CD4-positive, alpha-beta memory T cell (primary cell): ENCODE measurements at regions of chr7 and their contacts with region 1.

Region 1: GRCh38 chr7:107150375-107151073 is 18.3 kb upstream of the HBP1 start:
- DNase-seq: peak; percentile 68 to 81 (median 74)
- H3K4me3 ChIP-seq: no peak overlapping the region
- H3K4me3 Mint-ChIP-seq: no peak overlapping the region
- H3K27ac ChIP-seq: no peak overlapping the region
- H3K27ac Mint-ChIP-seq: no peak overlapping the region
- H3K4me1 ChIP-seq: no peaks in the 10 kb centered on the region
- H3K4me1 Mint-ChIP-seq: peaks cover 0 to 2% (median 1%) of the 10 kb centered on the region in 4 donors
- H3K27me3 ChIP-seq: no peaks in the 10 kb centered on the region
- H3K27me3 Mint-ChIP-seq: peaks cover 0 to 2% of the 10 kb centered on the region in 2 donors

Region 2: GRCh38 chr7:106514881-106515280 is 635.6 kb before region 1 on chr7:
- CTCF ChIA-PET with region 1: no interaction called
- POLR2A ChIA-PET with region 1: no interaction called
- intact Hi-C with region 1: no loop called
- DNase-seq: no peak
- H3K4me3 ChIP-seq: no peak overlapping the region
- H3K4me3 Mint-ChIP-seq: no peak overlapping the region
- H3K27ac ChIP-seq: no peak overlapping the region
- H3K27ac Mint-ChIP-seq: no peak overlapping the region
- H3K4me1 ChIP-seq: no peaks in the 10 kb centered on the region
- H3K4me1 Mint-ChIP-seq: peaks cover 0 to 4% (median 3%) of the 10 kb centered on the region in 4 donors
- H3K27me3 ChIP-seq: no peaks in the 10 kb centered on the region
- H3K27me3 Mint-ChIP-seq: peaks cover 12 to 17% of the 10 kb centered on the region in 2 donors

Region 3: DNA sequence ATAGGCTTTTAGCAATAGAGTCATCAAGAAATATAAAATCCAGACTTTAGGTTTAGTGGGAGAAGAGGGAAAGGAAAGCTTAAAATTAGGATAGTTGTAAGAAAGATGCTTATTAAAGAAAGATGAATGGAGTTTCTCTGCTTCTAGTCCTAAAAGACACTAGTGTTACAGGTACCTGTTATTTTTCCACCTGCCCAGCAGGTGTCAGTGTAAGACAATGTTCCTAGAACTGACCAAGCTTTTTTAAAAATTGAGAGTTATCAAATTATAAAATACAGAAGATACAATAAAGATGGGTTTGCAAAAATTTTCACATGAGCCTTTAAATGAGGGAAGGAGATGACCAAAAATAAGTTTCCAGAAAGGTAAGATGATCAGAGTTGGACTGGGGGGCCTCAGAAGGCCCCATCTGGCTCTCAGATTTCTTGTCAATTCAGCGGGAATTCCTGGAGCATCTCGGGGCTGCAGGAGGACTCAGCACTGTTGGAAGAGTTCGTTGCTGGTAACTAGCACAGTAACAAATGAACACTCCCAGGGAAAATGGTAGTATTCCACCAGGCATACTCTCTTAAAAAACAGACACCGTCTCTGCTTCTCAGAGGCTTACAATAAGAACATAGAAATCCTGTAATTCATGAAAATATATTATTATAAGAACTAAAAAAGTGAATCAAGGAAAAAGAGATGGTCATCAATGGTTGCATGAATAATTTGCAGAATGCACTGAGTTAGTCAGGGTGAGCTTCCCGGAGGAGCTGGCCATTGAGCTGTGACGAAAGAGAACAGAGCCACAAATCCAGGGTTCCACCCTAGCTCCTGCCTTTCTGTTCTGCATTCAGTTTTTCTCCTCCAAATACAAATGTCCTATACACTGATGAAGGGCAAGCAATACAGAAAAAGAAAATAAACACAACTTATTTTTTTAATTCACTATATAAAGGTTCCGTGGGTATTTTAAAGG is 357.2 kb before region 1 on chr7:
- CTCF ChIA-PET with region 1: interaction called, 56 read pairs
- POLR2A ChIA-PET with region 1: interaction called, 8 read pairs
- intact Hi-C with region 1: loop called (anchors 1 kb)
- DNase-seq: peak in 4 of 5 donors; percentile 47 to 52 (median 48)
- H3K4me3 ChIP-seq: no peak overlapping the region
- H3K4me3 Mint-ChIP-seq: no peak overlapping the region
- H3K27ac ChIP-seq: no peak overlapping the region
- H3K27ac Mint-ChIP-seq: no peak overlapping the region
- H3K4me1 ChIP-seq: no peaks in the 10 kb centered on the region
- H3K4me1 Mint-ChIP-seq: peaks cover 0 to 3% (median 0%) of the 10 kb centered on the region in 4 donors
- H3K27me3 ChIP-seq: no peaks in the 10 kb centered on the region
- H3K27me3 Mint-ChIP-seq: peaks cover 2 to 3% of the 10 kb centered on the region in 2 donors

Region 4: GRCh38 chr7:107122486-107122911 is 28.0 kb before region 1 on chr7:
- CTCF ChIA-PET with region 1: interaction called, 19 read pairs
- POLR2A ChIA-PET with region 1: no interaction called
- intact Hi-C with region 1: no loop called
- DNase-seq: no peak
- H3K4me3 ChIP-seq: no peak overlapping the region
- H3K4me3 Mint-ChIP-seq: no peak overlapping the region
- H3K27ac ChIP-seq: no peak overlapping the region
- H3K27ac Mint-ChIP-seq: no peak overlapping the region
- H3K4me1 ChIP-seq: peaks cover 21% of the 10 kb centered on the region
- H3K4me1 Mint-ChIP-seq: peaks cover 13 to 24% (median 19%) of the 10 kb centered on the region in 4 donors
- H3K27me3 ChIP-seq: no peaks in the 10 kb centered on the region
- H3K27me3 Mint-ChIP-seq: peaks cover 4% of the 10 kb centered on the region in 2 donors

Region 5: GRCh38 chr7:107173691-107174406 is 23.3 kb after region 1 on chr7:
- CTCF ChIA-PET with region 1: interaction called, 56 read pairs
- POLR2A ChIA-PET with region 1: interaction called, 86 read pairs
- intact Hi-C with region 1: no loop called
- DNase-seq: no peak
- H3K4me3 ChIP-seq: no peak overlapping the region
- H3K4me3 Mint-ChIP-seq: peak overlapping the region in 7 of 8 donors; percentile 25 to 71 (median 64)
- H3K27ac ChIP-seq: peak overlapping the region; percentile 3
- H3K27ac Mint-ChIP-seq: peak overlapping the region in 4 of 7 donors; percentile 12 to 87 (median 64)
- H3K4me1 ChIP-seq: peaks cover 74% of the 10 kb centered on the region
- H3K4me1 Mint-ChIP-seq: peaks cover 44 to 81% (median 57%) of the 10 kb centered on the region in 4 donors
- H3K27me3 ChIP-seq: no peaks in the 10 kb centered on the region
- H3K27me3 Mint-ChIP-seq: no peaks in the 10 kb centered on the region

Region 6: DNA sequence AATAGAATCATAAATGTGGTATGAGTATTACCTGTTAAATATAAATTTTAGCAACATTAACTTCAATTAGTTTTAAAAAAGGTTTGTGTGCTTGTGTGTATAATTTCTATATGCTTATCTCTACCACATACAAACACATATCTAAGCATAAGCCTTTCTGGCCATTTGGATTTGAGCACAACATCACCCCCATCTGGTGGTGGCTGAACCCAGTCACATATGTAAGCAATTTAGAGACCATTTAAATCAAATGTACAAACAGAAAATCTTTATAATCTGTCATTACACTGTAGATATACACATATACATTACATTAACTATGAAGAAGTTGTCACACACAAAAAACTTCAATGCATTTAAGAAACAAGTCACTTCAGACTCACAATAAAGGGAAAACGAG is 351.1 kb after region 1 on chr7:
- CTCF ChIA-PET with region 1: no interaction called
- POLR2A ChIA-PET with region 1: no interaction called
- intact Hi-C with region 1: loop called (anchors 5 kb)
- DNase-seq: peak in 4 of 5 donors; percentile 4 to 7 (median 6)
- H3K4me3 ChIP-seq: no peak overlapping the region
- H3K4me3 Mint-ChIP-seq: no peak overlapping the region
- H3K27ac ChIP-seq: no peak overlapping the region
- H3K27ac Mint-ChIP-seq: no peak overlapping the region
- H3K4me1 ChIP-seq: no peaks in the 10 kb centered on the region
- H3K4me1 Mint-ChIP-seq: peaks cover 15 to 45% (median 25%) of the 10 kb centered on the region in 4 donors
- H3K27me3 ChIP-seq: no peaks in the 10 kb centered on the region
- H3K27me3 Mint-ChIP-seq: no peaks in the 10 kb centered on the region

Region 7: DNA sequence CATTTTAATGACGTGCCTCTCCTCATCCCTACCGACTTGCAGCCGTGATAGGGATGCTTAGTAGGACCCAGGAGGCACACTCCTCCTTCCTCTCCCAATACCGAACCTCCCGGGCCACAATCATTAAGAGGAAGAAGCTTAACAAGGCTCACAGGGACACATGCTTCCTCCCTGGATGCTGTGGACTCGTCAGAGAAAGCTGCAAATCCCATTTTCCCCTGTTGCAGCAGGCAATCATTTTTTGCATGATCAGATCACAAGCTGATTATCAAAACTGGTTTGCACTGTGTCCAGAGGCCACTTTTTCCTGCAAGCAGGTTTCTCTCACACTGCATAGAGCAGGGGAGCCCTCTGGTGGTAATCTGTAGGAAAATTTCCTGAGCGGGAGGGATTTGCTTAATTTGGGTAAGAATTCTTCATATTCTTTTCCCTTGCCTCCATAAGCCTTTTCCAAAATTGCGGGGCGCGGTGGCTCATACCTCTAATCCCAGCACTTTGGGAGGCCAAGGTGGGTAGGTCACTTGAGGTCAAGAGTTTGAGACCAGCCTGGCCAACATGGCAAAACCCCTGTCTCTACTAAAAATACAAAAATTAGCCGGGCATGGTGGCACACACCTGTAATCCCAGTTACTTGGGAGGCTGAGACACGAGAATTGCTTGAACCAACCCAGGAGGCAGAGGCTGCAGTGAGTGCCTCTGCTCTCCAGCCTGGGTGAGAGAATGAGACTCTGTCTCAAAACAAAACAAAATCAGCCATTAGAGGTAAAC is 995.7 kb after region 1 on chr7:
- CTCF ChIA-PET with region 1: interaction called, 14 read pairs
- POLR2A ChIA-PET with region 1: no interaction called
- intact Hi-C with region 1: loop called (anchors 5 kb)
- DNase-seq: peak in 4 of 5 donors; percentile 26 to 41 (median 34)
- H3K4me3 ChIP-seq: no peak overlapping the region
- H3K4me3 Mint-ChIP-seq: no peak overlapping the region
- H3K27ac ChIP-seq: no peak overlapping the region
- H3K27ac Mint-ChIP-seq: no peak overlapping the region
- H3K4me1 ChIP-seq: no peaks in the 10 kb centered on the region
- H3K4me1 Mint-ChIP-seq: no peaks in the 10 kb centered on the region
- H3K27me3 ChIP-seq: no peaks in the 10 kb centered on the region
- H3K27me3 Mint-ChIP-seq: peaks cover 5 to 11% of the 10 kb centered on the region in 2 donors